Transverse colon (tissue), 4 donors: ENCODE measurements at regions of chr17 and their contacts with region 1.

Region 1: DNA sequence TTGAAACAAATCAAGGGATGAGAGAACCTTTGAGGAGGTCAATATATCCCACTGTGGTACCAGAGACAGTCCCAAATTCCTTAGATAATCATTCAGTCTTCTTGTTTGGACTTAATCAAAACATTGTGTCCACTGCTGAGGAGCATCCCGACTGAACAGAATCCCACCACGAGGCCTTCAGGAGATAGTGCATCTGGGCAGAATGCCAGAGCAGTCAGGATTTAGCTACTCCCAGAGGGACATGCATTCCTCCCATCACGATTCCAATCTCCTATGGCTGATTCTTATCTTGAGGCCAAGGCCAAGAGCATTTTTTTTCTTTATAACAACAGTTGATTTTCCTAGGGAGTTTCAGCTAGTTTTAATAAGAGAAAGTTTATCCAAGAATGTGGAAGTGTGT is 87.4 kb upstream of the COX10 start:
- DNase-seq: no peak
- H3K4me3 ChIP-seq: no peak overlapping the region
- H3K27ac ChIP-seq: no peak overlapping the region
- H3K4me1 ChIP-seq: no peaks in the 10 kb centered on the region
- H3K27me3 ChIP-seq: no peaks in the 10 kb centered on the region
- CTCF ChIP-seq: no peak
- EP300 ChIP-seq: no peak
- POLR2A ChIP-seq: no peak

Region 2: GRCh38 chr17:13957636-13958035 is 24.2 kb before region 1 on chr17:
- in situ Hi-C with region 1: no loop called
- intact Hi-C with region 1: no loop called
- DNase-seq: no peak
- H3K4me3 ChIP-seq: no peak overlapping the region
- H3K27ac ChIP-seq: no peak overlapping the region
- H3K4me1 ChIP-seq: no peaks in the 10 kb centered on the region
- H3K27me3 ChIP-seq: no peaks in the 10 kb centered on the region
- CTCF ChIP-seq: no peak
- EP300 ChIP-seq: no peak
- POLR2A ChIP-seq: no peak

Region 3: DNA sequence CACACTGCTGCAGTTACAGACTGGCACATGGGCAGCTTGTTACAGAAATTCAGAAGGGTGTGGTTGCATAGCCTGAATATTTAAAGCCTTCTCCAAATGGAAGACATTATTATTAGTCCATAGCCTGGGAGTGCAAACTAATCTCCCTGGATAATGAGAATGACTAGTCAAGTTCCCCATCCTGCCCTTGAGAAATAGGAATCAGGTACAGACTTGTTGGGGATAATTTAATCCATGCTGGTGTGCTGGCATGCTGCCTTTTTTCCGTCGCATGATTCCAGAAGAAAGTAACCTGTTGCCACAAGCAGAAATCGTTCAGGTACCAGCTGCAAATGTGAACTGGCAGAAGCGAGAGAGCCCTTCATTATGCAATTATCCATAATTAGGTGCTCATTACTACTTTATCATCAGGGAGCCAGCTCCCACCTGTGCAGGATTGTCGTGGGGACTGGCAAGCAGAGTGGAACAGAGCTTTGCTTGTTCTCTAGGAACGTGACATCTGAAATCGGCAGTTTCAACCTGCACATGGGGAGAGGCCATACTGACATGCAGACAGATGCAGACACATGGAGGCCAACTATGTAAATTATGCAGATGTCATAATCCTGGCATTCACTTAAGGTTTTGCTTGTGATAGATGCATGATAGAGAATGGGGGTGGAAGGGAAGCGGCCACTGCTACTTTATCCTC is 863.9 kb after region 1 on chr17:
- in situ Hi-C with region 1: no loop called
- intact Hi-C with region 1: loop called (anchors 10 kb)
- DNase-seq: no peak
- H3K4me3 ChIP-seq: no peak overlapping the region
- H3K27ac ChIP-seq: no peak overlapping the region
- H3K4me1 ChIP-seq: no peaks in the 10 kb centered on the region
- H3K27me3 ChIP-seq: peaks cover 3% of the 10 kb centered on the region
- CTCF ChIP-seq: no peak
- EP300 ChIP-seq: no peak
- POLR2A ChIP-seq: no peak